ENCODE measurements at regions of chr4 and their contacts with region 1.

Region 1: GRCh38 chr4:86043755-86044592 is 315.9 kb downstream of the MAPK10 start:
- DNase-seq: peak in 3 of 5 donors; percentile 15 to 24 (median 18)
- ATAC-seq: peak in 2 of 4 donors; percentile 46 to 47
- H3K4me3 ChIP-seq: no peak overlapping the region
- H3K27ac ChIP-seq: no peak overlapping the region
- H3K4me1 ChIP-seq: peaks cover 0 to 9% (median 0%) of the 10 kb centered on the region in 12 donors
- H3K27me3 ChIP-seq: no peaks in the 10 kb centered on the region
- CTCF ChIP-seq: peak; percentile 58 to 77 (median 74)
- POLR2A ChIP-seq: no peak

Region 2: GRCh38 chr4:85084380-85085094 is 959.4 kb before region 1 on chr4:
- intact Hi-C with region 1: loop called in 9 of 10 experiments (anchors 2 to 10 kb)
- DNase-seq: peak in 2 of 5 donors; percentile 25 to 36
- ATAC-seq: peak in 2 of 4 donors; percentile 63 to 75
- H3K4me3 ChIP-seq: no peak overlapping the region
- H3K27ac ChIP-seq: no peak overlapping the region
- H3K4me1 ChIP-seq: peaks cover 0 to 5% (median 0%) of the 10 kb centered on the region in 12 donors
- H3K27me3 ChIP-seq: no peaks in the 10 kb centered on the region
- CTCF ChIP-seq: peak; percentile 58 to 87 (median 74)
- POLR2A ChIP-seq: no peak

Region 3: GRCh38 chr4:85756938-85757337 is 287.0 kb before region 1 on chr4:
- intact Hi-C with region 1: loop called in 8 of 10 experiments (anchors 2 to 10 kb)
- DNase-seq: peak in 1 of 5 donors; percentile 44
- ATAC-seq: peak in 3 of 4 donors; percentile 38 to 83 (median 59)
- H3K4me3 ChIP-seq: no peak overlapping the region
- H3K27ac ChIP-seq: no peak overlapping the region
- H3K4me1 ChIP-seq: peaks cover 0 to 36% (median 13%) of the 10 kb centered on the region in 12 donors
- H3K27me3 ChIP-seq: no peaks in the 10 kb centered on the region
- CTCF ChIP-seq: peak; percentile 22 to 64 (median 44)
- POLR2A ChIP-seq: no peak

Region 4: DNA sequence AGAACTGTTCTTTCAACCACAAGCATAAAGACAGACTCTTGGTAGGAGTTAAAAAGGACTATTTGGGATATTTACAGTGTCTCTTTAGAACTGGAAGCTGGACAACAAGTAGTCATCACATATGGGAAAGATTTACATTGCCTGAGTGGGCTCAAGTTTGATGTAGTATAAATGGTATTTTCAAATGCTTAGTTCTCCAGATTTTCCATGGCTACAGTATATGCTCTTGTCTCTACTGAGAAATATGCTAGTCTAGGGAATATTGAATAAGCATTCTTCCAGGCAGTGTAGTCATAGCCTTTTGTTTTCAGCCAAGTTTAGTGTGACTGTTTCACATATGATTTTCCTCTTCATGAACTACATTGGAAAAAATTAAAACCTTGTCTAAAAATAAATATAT is 253.4 kb before region 1 on chr4:
- intact Hi-C with region 1: loop called in 3 of 10 experiments (anchors 10 kb)
- DNase-seq: no peak
- ATAC-seq: no peak
- H3K4me3 ChIP-seq: no peak overlapping the region
- H3K27ac ChIP-seq: peak overlapping the region in 1 of 12 donors; percentile 1
- H3K4me1 ChIP-seq: peaks cover 0 to 43% (median 15%) of the 10 kb centered on the region in 12 donors
- H3K27me3 ChIP-seq: no peaks in the 10 kb centered on the region
- CTCF ChIP-seq: no peak
- POLR2A ChIP-seq: no peak

Region 5: GRCh38 chr4:85979276-85979675 is 64.7 kb before region 1 on chr4:
- intact Hi-C with region 1: loop called in 2 of 10 experiments (anchors 5 to 10 kb)
- DNase-seq: no peak
- ATAC-seq: no peak
- H3K4me3 ChIP-seq: no peak overlapping the region
- H3K27ac ChIP-seq: no peak overlapping the region
- H3K4me1 ChIP-seq: no peaks in the 10 kb centered on the region
- H3K27me3 ChIP-seq: no peaks in the 10 kb centered on the region
- CTCF ChIP-seq: no peak
- POLR2A ChIP-seq: no peak

Region 6: DNA sequence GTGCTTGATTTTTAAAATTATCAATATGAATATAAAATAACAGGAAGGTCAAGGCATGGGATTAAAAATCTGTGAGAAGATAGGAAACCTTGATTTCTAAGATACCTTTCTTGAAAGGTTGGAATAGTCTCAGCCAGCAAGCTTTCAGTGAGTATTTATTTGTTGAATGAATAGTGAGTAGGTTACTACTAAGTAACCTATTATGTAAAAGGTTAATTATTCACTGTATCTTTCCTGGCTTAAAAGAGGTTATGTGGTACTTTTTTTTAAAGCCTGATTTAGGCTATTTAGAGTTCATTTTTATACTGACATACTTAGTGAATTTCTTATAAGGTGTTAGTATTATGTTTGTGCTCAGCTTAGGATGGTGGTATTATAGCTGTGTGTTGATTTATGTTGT is 673.7 kb after region 1 on chr4:
- intact Hi-C with region 1: no loop called
- DNase-seq: no peak
- ATAC-seq: no peak
- H3K4me3 ChIP-seq: no peak overlapping the region
- H3K27ac ChIP-seq: no peak overlapping the region
- H3K4me1 ChIP-seq: no peaks in the 10 kb centered on the region
- H3K27me3 ChIP-seq: no peaks in the 10 kb centered on the region
- CTCF ChIP-seq: no peak
- POLR2A ChIP-seq: no peak